Posterior vena cava (tissue), 2 donors: ENCODE measurements at regions of chr10 and their contacts with region 1.

Region 1: DNA sequence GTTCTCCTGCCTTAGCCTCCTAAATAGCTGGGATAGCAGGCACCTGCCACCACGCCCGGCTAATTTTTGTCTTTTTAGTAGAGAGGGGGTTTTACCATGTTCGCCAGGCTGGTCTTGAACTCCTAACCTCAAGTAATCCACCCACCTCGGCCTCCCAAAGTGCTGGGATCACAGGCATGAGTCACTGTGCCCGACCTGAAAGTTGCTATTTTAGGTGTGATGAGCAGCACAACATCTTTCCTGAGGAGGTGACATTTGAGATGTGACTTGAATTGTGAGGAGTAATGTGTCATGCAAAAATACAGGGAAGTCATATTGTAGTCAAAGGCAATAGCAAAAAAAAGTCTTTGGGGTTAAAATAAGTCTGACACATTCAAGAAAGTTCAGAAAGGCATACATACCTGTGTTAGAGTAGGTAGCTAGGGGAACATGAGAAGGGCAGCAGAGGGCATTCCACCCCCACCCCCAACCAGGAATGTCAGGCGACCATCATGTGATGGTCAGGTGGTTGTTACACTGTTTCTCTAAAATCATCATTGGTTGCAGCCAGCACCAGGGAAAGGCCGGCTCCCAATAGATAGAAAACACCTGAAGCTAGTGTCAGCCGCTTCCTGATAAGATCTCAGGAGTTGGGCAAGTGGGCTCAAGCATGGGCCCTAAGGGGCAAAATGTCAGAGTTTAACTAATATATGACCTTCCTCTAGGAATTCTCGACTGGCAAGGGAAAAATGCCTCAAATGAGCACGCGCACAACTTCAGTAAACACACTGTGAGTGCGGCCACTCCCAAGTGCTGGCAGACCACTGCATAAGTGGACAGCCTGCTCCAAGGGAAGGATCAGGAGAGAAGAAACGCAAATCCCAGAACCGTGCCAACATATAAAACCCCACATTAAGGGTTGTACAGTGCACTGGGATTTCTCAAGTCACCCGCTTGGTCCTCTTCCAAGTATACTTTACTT is at the start of gene TACC2:
- DNase-seq: no peak
- total RNA-seq, gene TACC2: 54.6 to 75.8 TPM

Region 2: DNA sequence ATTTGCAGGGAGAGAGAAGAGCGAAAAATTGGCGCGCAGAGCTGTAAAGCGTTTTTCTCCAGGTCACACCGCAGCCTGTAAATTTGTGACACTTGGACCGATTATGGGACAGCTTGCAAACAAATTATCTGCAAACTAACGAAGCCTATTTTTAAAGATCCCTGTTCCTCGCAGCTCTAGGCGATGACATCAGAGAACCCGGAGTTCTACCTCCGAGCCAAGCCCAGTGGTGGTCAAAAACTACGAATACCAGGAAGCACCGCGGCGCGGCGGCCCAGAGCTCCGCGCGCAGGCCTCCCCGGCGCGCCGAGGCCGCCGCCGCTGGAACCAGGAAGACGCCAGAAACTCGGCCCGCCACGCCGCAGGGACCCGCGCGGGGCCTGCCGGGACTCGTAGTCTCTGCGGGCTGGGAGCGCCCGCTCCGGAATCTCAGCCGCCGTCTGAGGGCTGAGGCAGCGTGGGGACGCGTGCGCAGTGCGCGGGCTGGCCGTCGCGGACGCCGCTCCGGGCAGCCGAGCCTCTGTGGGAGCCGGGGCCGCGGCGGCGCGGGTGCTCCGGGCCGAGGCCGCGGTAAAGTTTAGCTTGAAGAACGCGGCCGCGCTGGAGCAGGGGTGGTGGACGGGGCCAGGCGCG is 385.7 kb after region 1 on chr10 and contains the start of gene PLEKHA1:
- intact Hi-C with region 1: loop called in 1 of 2 experiments (anchors 10 kb)
- DNase-seq: peak; percentile 98
- total RNA-seq, gene PLEKHA1: 29.3 to 42.3 TPM